Breast epithelium (tissue), 4 donors: ENCODE measurements at regions of chr19 and their contacts with region 1.

Region 1: DNA sequence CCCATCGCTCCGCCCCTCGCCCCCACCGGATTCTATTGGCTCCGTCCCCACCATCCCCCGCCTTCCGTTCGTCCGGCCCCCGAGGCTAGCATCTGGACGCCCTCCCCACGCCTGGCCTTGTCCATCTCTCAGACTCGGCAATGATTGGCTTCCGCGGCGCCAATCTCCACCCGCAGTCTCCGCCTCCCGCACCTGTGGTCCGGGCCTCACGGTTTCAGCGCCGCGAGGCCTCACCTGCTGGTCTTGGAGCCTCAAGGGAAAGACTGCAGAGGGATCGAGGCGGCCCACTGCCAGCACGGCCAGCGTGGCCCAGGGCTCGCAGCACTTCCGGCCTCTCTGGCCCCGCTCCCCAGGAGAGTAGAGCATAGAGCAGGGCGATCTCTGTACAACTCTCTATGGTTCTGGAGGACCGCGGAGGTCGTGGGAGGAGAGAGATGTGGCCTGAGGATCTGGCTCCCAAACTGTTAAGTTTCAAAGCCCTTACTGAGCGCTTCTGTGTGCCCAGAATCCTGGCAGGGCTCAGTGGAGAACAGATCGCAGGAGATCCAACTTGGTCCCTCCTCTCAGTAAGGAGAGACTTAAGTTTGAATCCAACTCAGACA is at the start of gene ERCC1:
- DNase-seq: peak; percentile 93 to 95
- H3K4me3 ChIP-seq: peak within 1 kb of the TSS; percentile 60 to 83 (median 68)
- H3K27ac ChIP-seq: peak within 1 kb of the TSS; percentile 90 to 97
- H3K4me1 ChIP-seq: peaks cover 0 to 8% of the 10 kb centered on the region in 2 donors
- H3K27me3 ChIP-seq: no peaks in the 10 kb centered on the region
- CTCF ChIP-seq: no peak
- POLR2A ChIP-seq: peak; percentile 56
- total RNA-seq, gene ERCC1: 89.9 to 96.7 (median 91.2) TPM

Region 2: GRCh38 chr19:45405435-45406225 is 18.1 kb before region 1 on chr19:
- intact Hi-C with region 1: loop called (anchors 2 kb)
- DNase-seq: peak; percentile 91 to 95
- H3K4me3 ChIP-seq: peak overlapping the region; percentile 61 to 80 (median 66)
- H3K27ac ChIP-seq: peak overlapping the region; percentile 97 to 99
- H3K4me1 ChIP-seq: peaks cover 4 to 16% of the 10 kb centered on the region in 2 donors
- H3K27me3 ChIP-seq: no peaks in the 10 kb centered on the region
- CTCF ChIP-seq: no peak
- POLR2A ChIP-seq: no peak